ENCODE measurements at regions of chr19 and their contacts with region 1.

Region 1: DNA sequence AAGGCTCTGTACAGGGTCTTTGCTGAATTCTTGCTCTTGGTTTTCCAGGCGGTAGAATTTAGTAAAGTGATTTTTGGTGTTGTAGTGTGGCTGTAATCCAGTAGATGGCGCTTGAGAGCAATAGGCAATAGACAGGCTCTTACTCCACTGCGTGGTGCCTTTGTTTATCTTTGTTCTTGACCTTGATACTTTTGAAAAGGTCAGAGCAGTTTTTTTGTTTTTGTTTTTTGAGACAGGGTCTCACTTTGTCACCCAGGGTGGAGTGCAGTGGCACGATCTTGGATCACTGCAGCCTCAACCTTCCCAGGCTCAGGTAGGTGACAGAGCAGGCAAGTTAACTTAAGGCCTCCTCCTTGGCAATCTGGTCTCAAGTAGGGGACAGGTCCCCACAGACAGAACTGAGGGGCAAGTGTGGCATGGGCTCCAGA is 12.2 kb upstream of the LILRA5 start:
- DNase-seq: no peak
- ATAC-seq: peak in 2 of 8 donors; percentile 55 to 58
- H3K4me3 ChIP-seq: no peak overlapping the region
- H3K27ac ChIP-seq: no peak overlapping the region
- H3K4me1 ChIP-seq: peaks cover 0 to 6% (median 0%) of the 10 kb centered on the region in 9 donors
- H3K27me3 ChIP-seq: peaks cover 0 to 45% (median 22%) of the 10 kb centered on the region in 7 donors
- CTCF ChIP-seq: peak; percentile 56 to 89 (median 78)

Region 2: GRCh38 chr19:54390942-54391577 is 65.9 kb after region 1 on chr19:
- intact Hi-C with region 1: loop called in 8 of 10 experiments (anchors 2 to 10 kb)
- DNase-seq: peak in 1 of 2 donors; percentile 51
- ATAC-seq: peak in 2 of 8 donors; percentile 17 to 45
- H3K4me3 ChIP-seq: no peak overlapping the region
- H3K27ac ChIP-seq: no peak overlapping the region
- H3K4me1 ChIP-seq: peaks cover 0 to 44% (median 11%) of the 10 kb centered on the region in 9 donors
- H3K27me3 ChIP-seq: peaks cover 0 to 98% (median 63%) of the 10 kb centered on the region in 7 donors
- CTCF ChIP-seq: peak; percentile 64 to 79 (median 77)

Measured in heart right ventricle (tissue), 16 donors.